Activated CD4-positive, alpha-beta T cell treated with anti-CD3 and anti-CD28 coated beads for 36 hours (primary cell): ENCODE measurements at regions of chr13 and their contacts with region 1.

Region 1: GRCh38 chr13:80342471-80343380 is 1.8 kb upstream of the SPRY2 start:
- DNase-seq: peak; percentile 83
- ATAC-seq: peak; percentile 60
- H3K4me3 Mint-ChIP-seq: peak overlapping the region; percentile 63
- H3K27ac Mint-ChIP-seq: no peak overlapping the region
- H3K4me1 Mint-ChIP-seq: peaks cover 9% of the 10 kb centered on the region
- H3K27me3 Mint-ChIP-seq: peaks cover 26% of the 10 kb centered on the region

Region 2: GRCh38 chr13:78595495-78596398 is 1747.0 kb before region 1 on chr13:
- CTCF ChIA-PET with region 1: no interaction called
- POLR2A ChIA-PET with region 1: no interaction called
- intact Hi-C with region 1: loop called in 1 of 2 experiments (anchors 5 kb)
- DNase-seq: peak; percentile 58
- ATAC-seq: peak; percentile 80
- H3K4me3 Mint-ChIP-seq: peak overlapping the region; percentile 36
- H3K27ac Mint-ChIP-seq: no peak overlapping the region
- H3K4me1 Mint-ChIP-seq: peaks cover under 1% of the 10 kb centered on the region
- H3K27me3 Mint-ChIP-seq: peaks cover 73% of the 10 kb centered on the region

Region 3: GRCh38 chr13:80048802-80049201 is 293.9 kb before region 1 on chr13:
- CTCF ChIA-PET with region 1: no interaction called
- POLR2A ChIA-PET with region 1: no interaction called
- intact Hi-C with region 1: loop called in 1 of 2 experiments (anchors 5 kb)
- DNase-seq: peak; percentile 85
- ATAC-seq: peak; percentile 98
- H3K4me3 Mint-ChIP-seq: no peak overlapping the region
- H3K27ac Mint-ChIP-seq: no peak overlapping the region
- H3K4me1 Mint-ChIP-seq: peaks cover 16% of the 10 kb centered on the region
- H3K27me3 Mint-ChIP-seq: peaks cover 14% of the 10 kb centered on the region

Region 4: GRCh38 chr13:80094526-80094925 is 248.2 kb before region 1 on chr13:
- CTCF ChIA-PET with region 1: no interaction called
- POLR2A ChIA-PET with region 1: no interaction called
- intact Hi-C with region 1: no loop called
- DNase-seq: no peak
- ATAC-seq: no peak
- H3K4me3 Mint-ChIP-seq: no peak overlapping the region
- H3K27ac Mint-ChIP-seq: no peak overlapping the region
- H3K4me1 Mint-ChIP-seq: no peaks in the 10 kb centered on the region
- H3K27me3 Mint-ChIP-seq: no peaks in the 10 kb centered on the region

Region 5: GRCh38 chr13:80363890-80364503 is 21.3 kb after region 1 on chr13:
- CTCF ChIA-PET with region 1: interaction called, 14 read pairs
- POLR2A ChIA-PET with region 1: no interaction called
- intact Hi-C with region 1: no loop called
- DNase-seq: no peak
- ATAC-seq: no peak
- H3K4me3 Mint-ChIP-seq: no peak overlapping the region
- H3K27ac Mint-ChIP-seq: no peak overlapping the region
- H3K4me1 Mint-ChIP-seq: no peaks in the 10 kb centered on the region
- H3K27me3 Mint-ChIP-seq: peaks cover 2% of the 10 kb centered on the region

Region 6: DNA sequence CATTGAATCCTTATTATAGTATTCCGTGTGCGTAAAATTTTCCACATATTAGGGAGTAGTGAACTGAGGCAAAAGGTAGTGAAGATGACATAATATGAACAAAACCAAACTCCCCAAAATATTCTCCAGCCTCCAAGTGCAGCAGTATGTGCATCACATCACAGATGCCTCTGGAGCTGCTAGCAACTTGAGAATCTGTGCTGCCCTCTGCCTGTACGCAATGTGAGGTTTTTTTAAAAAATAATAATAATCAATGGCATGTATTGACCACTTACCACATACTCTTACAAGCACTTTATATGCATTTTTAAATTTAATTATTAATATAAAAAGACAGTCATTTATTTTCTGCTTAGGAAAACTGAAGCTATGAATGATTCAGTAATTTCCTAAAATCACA is 581.2 kb after region 1 on chr13:
- CTCF ChIA-PET with region 1: no interaction called
- POLR2A ChIA-PET with region 1: no interaction called
- intact Hi-C with region 1: loop called in 1 of 2 experiments (anchors 10 kb)
- DNase-seq: no peak
- ATAC-seq: no peak
- H3K4me3 Mint-ChIP-seq: no peak overlapping the region
- H3K27ac Mint-ChIP-seq: no peak overlapping the region
- H3K4me1 Mint-ChIP-seq: no peaks in the 10 kb centered on the region
- H3K27me3 Mint-ChIP-seq: no peaks in the 10 kb centered on the region

Region 7: DNA sequence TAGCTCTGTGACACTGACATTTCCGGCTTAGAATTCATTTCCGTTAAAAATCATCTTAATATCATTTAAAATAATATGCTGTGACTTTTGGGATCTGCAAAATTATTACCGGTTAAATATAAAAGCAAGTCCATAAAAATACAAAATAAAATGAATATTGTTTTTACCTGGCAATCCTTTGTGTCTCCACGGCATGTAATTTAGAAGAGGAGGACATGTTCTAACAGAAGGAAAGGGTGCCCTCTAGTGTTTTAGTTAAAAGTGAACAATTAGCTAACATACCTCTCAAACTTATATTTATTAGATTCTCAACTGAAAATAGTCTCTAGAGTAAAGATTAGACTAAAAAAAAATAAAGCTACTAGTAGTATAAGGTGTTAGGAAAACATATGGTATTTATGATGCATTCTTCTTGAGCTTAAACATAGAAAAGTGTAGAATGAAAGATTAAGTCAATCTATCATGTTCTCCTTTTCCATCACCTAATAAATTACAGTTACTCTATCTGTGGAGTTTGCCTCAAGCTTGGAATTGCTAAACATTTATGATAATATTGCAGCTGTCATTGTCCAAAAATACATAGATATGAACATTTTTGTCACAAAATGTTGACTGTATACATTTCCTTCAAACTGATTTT is 674.9 kb after region 1 on chr13:
- CTCF ChIA-PET with region 1: interaction called, 3 read pairs
- POLR2A ChIA-PET with region 1: no interaction called
- intact Hi-C with region 1: loop called in 1 of 2 experiments (anchors 2 kb)
- DNase-seq: no peak
- ATAC-seq: no peak
- H3K4me3 Mint-ChIP-seq: no peak overlapping the region
- H3K27ac Mint-ChIP-seq: no peak overlapping the region
- H3K4me1 Mint-ChIP-seq: no peaks in the 10 kb centered on the region
- H3K27me3 Mint-ChIP-seq: no peaks in the 10 kb centered on the region